Activated T-helper 2 cell treated with anti-CD3 and anti-CD28 coated beads, Interferon-gamma antibody, Interleukin-2, Interleukin-4, amounts not matched to agents 10 μg/mL and 5 μg/mL and 100 μg/mL, durations not matched to agents 14 hours and 24 hours and 36 hours (primary cell): ENCODE measurements at regions of chr9 and their contacts with region 1.

Region 1: DNA sequence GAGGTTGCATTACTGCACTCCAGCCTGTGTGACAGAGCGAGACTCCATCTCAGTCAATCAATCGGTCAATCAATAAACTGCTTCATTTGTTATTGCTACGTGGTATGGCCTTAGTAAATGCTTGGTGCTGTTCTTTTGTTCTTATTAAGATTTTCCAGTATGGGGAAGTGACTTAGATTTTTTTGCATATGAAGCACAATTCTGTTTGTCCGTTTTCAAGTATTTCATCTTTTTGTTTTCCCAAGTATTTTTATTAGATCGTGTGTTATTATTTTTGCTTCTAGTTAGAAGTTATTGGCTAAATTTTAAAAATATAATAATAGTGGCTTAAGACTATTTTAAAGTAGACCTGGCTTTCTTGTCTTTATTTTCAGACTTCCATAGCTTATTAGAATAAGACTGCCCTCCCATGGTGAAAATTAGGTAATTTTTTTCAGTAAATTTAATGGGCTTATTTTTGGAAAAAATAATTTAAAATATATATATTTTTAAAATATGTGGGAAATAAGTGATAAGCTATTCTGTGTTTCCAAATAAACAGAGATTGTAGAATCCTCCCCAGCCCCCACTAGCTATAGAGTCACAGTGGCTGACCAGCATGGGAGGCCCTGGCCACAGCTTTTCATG is 14.7 kb upstream of the OMD start:
- DNase-seq: no peak
- H3K4me3 Mint-ChIP-seq: no peak overlapping the region
- H3K27ac Mint-ChIP-seq: no peak overlapping the region
- H3K4me1 Mint-ChIP-seq: peaks cover 20% of the 10 kb centered on the region
- H3K27me3 Mint-ChIP-seq: no peaks in the 10 kb centered on the region

Region 2: DNA sequence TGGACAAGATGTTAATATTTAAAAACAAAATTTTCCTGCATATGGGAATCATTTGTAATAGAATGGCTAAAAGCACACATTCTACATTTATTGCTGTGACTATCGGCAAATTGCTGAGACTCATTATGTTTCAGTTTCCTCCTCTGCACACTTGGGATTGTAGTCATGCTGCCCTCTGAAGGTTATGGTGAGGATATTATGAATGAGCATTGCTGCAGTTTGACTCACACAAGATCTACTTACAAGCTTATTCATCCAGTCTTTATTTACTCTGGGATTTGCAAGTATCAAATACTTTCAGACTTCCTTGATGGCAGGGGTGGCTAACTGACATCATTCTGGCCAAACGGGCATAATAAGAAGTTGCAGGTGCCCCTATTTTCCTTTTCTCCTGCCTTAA is 1005.8 kb before region 1 on chr9:
- intact Hi-C with region 1: no loop called
- DNase-seq: no peak
- H3K4me3 Mint-ChIP-seq: no peak overlapping the region
- H3K27ac Mint-ChIP-seq: no peak overlapping the region
- H3K4me1 Mint-ChIP-seq: peaks cover 18% of the 10 kb centered on the region
- H3K27me3 Mint-ChIP-seq: peaks cover 12% of the 10 kb centered on the region

Region 3: DNA sequence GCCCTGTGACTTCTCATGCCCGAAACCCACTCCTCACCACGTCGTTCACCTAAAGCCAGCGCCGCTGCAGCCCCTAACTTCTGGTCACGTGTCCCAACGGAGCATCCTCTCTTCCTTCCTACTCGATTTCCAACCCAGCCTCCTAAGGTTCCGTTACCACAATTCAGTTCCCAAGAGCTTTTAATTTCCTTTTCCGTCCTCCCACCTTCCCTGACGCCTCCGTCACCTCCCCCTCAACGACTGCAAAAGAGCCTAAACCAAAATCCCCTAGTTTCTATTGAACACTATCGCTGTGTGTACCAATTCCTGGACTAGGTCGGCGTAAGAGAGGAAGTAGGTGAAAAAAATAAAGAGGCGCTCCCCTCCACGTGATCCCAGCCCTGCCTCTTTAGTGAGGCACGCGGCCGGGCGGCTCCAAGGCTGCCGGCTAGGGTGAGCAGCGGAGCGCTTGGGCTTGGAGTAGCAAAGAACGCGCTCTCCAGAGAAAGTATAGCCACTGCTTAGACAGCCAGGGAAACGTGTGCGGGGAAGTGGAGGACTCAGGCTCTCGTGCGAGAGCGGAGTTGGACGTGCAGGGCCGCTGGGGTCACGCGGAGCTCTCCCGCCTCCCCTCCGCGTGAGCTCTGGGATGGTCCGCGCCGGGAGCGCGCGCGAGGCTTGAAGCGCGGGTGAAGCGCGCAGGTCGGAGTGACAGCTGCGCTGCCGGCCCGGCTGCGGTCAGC is 113.6 kb before region 1 on chr9 and contains the starts of genes CENPP and NOL8:
- intact Hi-C with region 1: loop called (anchors 1 kb)
- DNase-seq: peak; percentile 82
- H3K4me3 Mint-ChIP-seq: peak within 1 kb of the TSS; percentile 92
- H3K27ac Mint-ChIP-seq: peak within 1 kb of the TSS; percentile 95
- H3K4me1 Mint-ChIP-seq: peaks cover 31% of the 10 kb centered on the region
- H3K27me3 Mint-ChIP-seq: no peaks in the 10 kb centered on the region
- total RNA-seq, gene CENPP: 19.2 and 21.0 TPM in 2 replicates
- total RNA-seq, gene NOL8: 73.2 and 75.5 TPM in 2 replicates